ENCODE measurements at regions of chr22 and their contacts with region 1.

Region 1: GRCh38 chr22:27839057-27839660 is 37.6 kb upstream of the MN1 start:
- DNase-seq: no peak
- H3K4me3 ChIP-seq: no peak overlapping the region
- H3K27ac ChIP-seq: no peak overlapping the region
- H3K4me1 ChIP-seq: peaks cover 3 to 12% (median 6%) of the 10 kb centered on the region in 4 experiments
- H3K27me3 ChIP-seq: no peaks in the 10 kb centered on the region
- CTCF ChIP-seq: no peak
- EP300 ChIP-seq: no peak
- POLR2A ChIP-seq: no peak
- RAD21 ChIP-seq: no peak

Region 2: GRCh38 chr22:27825174-27825573 is 14.0 kb before region 1 on chr22:
- CTCF ChIA-PET with region 1: interaction called, 13 read pairs
- POLR2A ChIA-PET with region 1: no interaction called
- DNase-seq: peak in 1 of 2 experiments; percentile 77
- H3K4me3 ChIP-seq: no peak overlapping the region
- H3K27ac ChIP-seq: no peak overlapping the region
- H3K4me1 ChIP-seq: peaks cover 0 to 6% (median 0%) of the 10 kb centered on the region in 4 experiments; a peak in 2 of 7 replicates
- H3K27me3 ChIP-seq: no peaks in the 10 kb centered on the region
- CTCF ChIP-seq: peak; percentile 52 to 91 (median 81)
- EP300 ChIP-seq: no peak
- POLR2A ChIP-seq: no peak
- RAD21 ChIP-seq: peak; percentile 60 to 64

Region 3: DNA sequence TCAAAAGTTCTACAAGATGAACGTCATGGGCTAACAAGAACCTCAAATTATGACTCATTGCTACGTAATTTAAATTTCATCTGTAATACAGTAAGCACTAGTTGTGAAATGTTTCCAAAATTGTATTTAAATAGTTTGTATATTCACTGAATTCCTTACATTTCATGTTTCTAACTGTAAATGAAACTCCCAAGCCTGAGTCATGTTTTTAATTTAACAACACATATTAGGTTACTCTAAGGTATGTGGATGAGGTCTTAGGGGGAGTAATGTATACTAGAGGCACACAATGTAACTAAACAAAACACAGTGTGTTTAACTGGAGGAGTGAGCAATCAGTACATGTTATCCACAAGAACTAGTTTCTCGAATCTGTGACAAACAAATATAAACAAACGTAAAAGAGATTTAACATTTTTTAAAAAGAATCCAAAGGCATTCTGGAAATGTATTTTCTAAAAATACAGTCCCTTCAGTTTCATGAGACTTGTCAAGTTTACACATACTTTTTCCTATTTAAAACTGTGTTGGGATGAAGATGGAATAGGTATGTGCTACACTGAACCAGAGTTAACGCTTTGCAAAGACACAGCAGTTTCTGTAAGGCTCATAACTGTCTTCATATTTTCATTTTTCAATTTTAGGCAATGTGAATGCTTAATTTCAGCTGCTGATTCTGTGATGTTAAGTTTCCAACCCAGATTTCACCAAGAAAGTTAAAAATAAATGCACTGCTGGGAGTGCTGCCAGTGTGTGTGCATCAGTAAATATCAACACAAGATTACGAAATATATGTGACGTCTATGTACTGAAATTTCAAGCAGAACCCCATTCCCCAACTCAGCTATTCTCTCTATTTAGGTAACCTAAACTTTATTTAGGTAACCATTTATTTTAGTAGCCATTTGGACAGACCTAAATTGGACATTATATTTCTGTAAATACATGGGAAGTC is 27.2 kb after region 1 on chr22:
- CTCF ChIA-PET with region 1: no interaction called
- POLR2A ChIA-PET with region 1: no interaction called
- DNase-seq: no peak
- H3K4me3 ChIP-seq: no peak overlapping the region
- H3K27ac ChIP-seq: no peak overlapping the region
- H3K4me1 ChIP-seq: no peaks in the 10 kb centered on the region; a peak in 3 of 7 replicates
- H3K27me3 ChIP-seq: no peaks in the 10 kb centered on the region
- CTCF ChIP-seq: no peak
- EP300 ChIP-seq: no peak
- POLR2A ChIP-seq: no peak
- RAD21 ChIP-seq: no peak